Activated CD4-positive, alpha-beta T cell treated with anti-CD3 and anti-CD28 coated beads for 36 hours (primary cell): ENCODE measurements at regions of chr15 and their contacts with region 1.

Region 1: DNA sequence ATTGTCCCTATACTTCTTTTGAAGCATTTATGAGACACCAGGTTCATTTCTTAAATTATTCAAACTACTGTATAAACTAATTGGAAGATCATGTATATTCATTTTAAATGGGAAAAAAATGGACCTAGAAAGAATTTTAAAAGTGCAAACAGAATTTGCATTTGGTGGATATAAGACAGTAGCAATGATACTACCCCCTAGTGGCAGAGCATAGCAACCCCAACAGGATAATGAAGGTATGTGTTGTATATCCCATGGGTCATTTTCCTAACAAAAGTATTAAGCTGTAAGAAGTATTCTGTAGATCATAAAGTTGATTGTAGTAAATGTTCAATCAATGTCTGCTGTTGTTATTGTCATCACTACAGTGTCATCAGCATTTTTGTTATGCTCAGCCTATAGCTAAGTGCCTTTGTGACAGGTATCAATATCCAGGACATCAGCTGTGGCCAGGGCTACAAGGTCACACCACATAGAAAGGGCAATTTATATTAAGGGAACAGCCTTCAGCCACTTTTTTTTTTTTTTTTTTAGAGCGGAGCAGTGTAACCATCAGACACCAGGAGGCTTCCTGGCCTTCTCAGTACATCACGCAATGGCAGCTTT is 175.8 kb downstream of the FOXB1 start:
- DNase-seq: peak; percentile 48
- ATAC-seq: peak; percentile 44
- H3K4me3 Mint-ChIP-seq: no peak overlapping the region
- H3K27ac Mint-ChIP-seq: no peak overlapping the region
- H3K4me1 Mint-ChIP-seq: no peaks in the 10 kb centered on the region
- H3K27me3 Mint-ChIP-seq: peaks cover 24% of the 10 kb centered on the region

Region 2: GRCh38 chr15:59725172-59725486 is 454.8 kb before region 1 on chr15:
- CTCF ChIA-PET with region 1: interaction called, 7 read pairs
- POLR2A ChIA-PET with region 1: no interaction called
- intact Hi-C with region 1: loop called (anchors 1 to 2 kb)
- DNase-seq: no peak
- ATAC-seq: no peak
- H3K4me3 Mint-ChIP-seq: no peak overlapping the region
- H3K27ac Mint-ChIP-seq: no peak overlapping the region
- H3K4me1 Mint-ChIP-seq: no peaks in the 10 kb centered on the region
- H3K27me3 Mint-ChIP-seq: no peaks in the 10 kb centered on the region

Region 3: DNA sequence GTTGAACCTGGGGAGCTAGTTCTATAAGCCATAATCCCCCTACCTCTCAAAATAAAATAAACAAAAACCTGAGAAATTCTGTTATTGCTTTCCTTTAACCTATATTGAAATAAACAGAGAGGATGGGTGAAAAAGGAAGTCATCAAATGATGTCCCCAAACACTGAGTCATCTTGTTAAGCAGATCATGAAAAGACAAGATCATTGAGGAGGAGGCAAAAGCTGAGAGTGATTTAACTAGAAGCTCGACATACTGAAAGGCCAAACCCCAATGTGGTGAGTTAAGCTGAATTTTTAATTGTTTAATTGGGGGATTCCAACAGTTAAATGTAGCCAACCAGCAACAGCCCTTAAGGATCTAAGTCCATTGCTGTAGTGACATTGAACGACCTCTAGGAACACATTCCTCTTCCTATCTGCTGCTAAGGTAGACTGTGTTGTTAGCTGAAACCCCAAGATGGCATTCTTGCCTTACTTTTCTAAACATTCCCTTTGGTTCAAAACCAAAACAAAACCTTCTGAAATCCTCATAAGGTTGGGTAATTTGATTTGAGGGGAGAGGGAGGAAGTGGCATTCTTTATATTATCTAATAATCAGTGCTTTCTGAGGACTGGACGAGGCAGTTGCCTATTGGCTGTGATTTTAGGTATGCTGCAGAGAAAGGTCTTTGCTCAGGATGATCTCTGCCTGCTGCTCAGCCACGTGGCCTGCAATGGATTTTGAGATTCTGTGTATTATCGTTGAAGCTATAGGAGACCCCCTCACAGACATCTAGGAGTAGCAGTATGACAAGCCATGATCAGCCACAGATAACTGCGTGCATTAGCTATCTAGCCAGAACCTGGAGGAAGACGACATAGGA is 428.1 kb before region 1 on chr15:
- CTCF ChIA-PET with region 1: interaction called, 6 read pairs
- POLR2A ChIA-PET with region 1: no interaction called
- intact Hi-C with region 1: loop called in 1 of 2 experiments (anchors 5 kb)
- DNase-seq: no peak
- ATAC-seq: peak; percentile 74
- H3K4me3 Mint-ChIP-seq: no peak overlapping the region
- H3K27ac Mint-ChIP-seq: no peak overlapping the region
- H3K4me1 Mint-ChIP-seq: peaks cover 5% of the 10 kb centered on the region
- H3K27me3 Mint-ChIP-seq: peaks cover 4% of the 10 kb centered on the region

Region 4: DNA sequence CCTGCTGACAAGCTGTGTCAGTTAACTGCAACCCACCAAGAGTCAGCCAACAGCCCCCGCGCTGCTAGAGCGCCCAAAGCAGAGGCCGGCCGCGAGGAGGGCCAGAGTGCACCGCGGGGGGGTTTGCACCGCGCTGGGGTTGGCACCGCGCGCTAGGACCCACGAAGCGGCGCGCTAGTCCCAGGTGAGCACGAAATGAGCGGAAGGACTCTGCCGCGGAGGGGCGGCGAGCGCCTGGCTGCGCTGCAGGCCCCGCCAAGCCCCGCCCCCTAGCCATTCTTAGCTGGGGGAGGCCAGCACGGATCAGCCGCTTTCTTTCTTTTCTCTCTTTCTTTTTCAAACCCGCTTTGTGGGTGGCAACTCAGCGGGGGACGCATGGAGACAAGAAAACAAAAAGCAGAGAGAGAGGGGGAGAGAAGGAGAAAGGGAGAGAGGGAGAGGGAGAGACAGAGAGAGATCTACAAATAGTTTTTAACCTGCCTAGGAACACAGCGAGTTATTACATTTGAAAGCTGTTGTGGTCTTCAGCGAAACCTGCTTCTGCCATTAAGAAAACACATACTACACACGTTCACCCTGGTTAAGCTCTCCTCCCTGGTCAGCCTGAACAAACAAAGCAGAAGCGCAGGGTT is 182.7 kb before region 1 on chr15:
- CTCF ChIA-PET with region 1: no interaction called
- POLR2A ChIA-PET with region 1: no interaction called
- intact Hi-C with region 1: loop called (anchors 2 to 5 kb)
- DNase-seq: peak; percentile 84
- ATAC-seq: peak; percentile 88
- H3K4me3 Mint-ChIP-seq: peak overlapping the region; percentile 59
- H3K27ac Mint-ChIP-seq: no peak overlapping the region
- H3K4me1 Mint-ChIP-seq: peaks cover 48% of the 10 kb centered on the region
- H3K27me3 Mint-ChIP-seq: peaks cover 86% of the 10 kb centered on the region

Region 5: DNA sequence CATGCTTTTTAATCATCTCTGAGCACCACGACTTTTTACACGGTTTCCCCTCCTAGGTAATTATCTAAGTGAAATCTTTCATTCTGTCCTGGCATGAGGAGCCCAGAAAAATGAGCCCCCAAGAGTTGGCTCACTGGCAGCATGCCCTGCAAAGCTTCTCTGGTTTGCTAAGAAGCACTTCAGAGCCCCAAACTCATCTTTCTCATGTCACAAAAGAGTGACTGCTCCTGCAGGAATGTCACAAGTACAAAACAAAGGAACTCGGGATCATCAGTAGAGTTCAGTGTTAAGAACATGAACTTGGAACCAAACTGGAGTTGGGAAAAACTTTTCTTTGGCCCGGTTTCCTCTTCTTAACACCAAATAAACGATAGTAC is 51.9 kb before region 1 on chr15:
- CTCF ChIA-PET with region 1: no interaction called
- POLR2A ChIA-PET with region 1: no interaction called
- intact Hi-C with region 1: loop called in 1 of 2 experiments (anchors 2 kb)
- DNase-seq: no peak
- ATAC-seq: no peak
- H3K4me3 Mint-ChIP-seq: peak overlapping the region; percentile 70
- H3K27ac Mint-ChIP-seq: peak overlapping the region; percentile 85
- H3K4me1 Mint-ChIP-seq: peaks cover 54% of the 10 kb centered on the region
- H3K27me3 Mint-ChIP-seq: no peaks in the 10 kb centered on the region